ENCODE measurements at regions of chr2 and their contacts with region 1.

Region 1: GRCh38 chr2:112958428-112959108 is 19.2 kb upstream of the IL36G start:
- DNase-seq: peak in 1 of 2 experiments; percentile 40
- H3K4me3 ChIP-seq: no peak overlapping the region
- H3K27ac ChIP-seq: no peak overlapping the region
- H3K4me1 ChIP-seq: peaks cover 7% of the 10 kb centered on the region; the same call in 1 of the 2 replicates
- H3K27me3 ChIP-seq: no peaks in the 10 kb centered on the region
- CTCF ChIP-seq: peak; percentile 93

Region 2: GRCh38 chr2:112204411-112204810 is 754.2 kb before region 1 on chr2:
- CTCF ChIA-PET with region 1: no interaction called
- POLR2A ChIA-PET with region 1: no interaction called
- intact Hi-C with region 1: no loop called
- DNase-seq: no peak
- H3K4me3 ChIP-seq: no peak overlapping the region
- H3K27ac ChIP-seq: no peak overlapping the region
- H3K4me1 ChIP-seq: no peaks in the 10 kb centered on the region
- H3K27me3 ChIP-seq: no peaks in the 10 kb centered on the region
- CTCF ChIP-seq: no peak

Region 3: DNA sequence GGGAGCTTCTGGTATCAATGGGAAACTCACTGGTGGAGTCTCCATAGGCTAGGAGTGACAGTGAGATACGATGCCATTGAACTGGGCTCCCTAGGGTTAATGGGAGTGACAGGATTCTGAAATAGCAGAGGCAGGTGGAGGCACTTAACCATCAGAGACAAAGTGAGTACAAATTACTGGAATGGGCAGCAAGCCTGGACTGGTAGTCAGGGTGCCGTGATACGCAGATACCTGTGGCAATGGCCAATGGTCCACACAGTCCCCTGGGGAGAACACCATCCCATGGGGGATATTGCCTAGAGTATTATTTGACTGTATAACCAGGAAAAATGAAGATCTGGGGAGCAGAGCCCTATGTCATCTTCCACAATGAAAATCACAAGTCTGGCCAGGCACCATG is 356.8 kb before region 1 on chr2:
- CTCF ChIA-PET with region 1: no interaction called
- POLR2A ChIA-PET with region 1: no interaction called
- intact Hi-C with region 1: loop called (anchors 1 kb)
- DNase-seq: no peak
- H3K4me3 ChIP-seq: no peak overlapping the region
- H3K27ac ChIP-seq: no peak overlapping the region
- H3K4me1 ChIP-seq: peaks cover 23% of the 10 kb centered on the region
- H3K27me3 ChIP-seq: no peaks in the 10 kb centered on the region
- CTCF ChIP-seq: no peak

Region 4: GRCh38 chr2:112749755-112750559 is 208.6 kb before region 1 on chr2:
- CTCF ChIA-PET with region 1: no interaction called
- POLR2A ChIA-PET with region 1: no interaction called
- intact Hi-C with region 1: loop called (anchors 1 kb)
- DNase-seq: peak in 1 of 2 experiments; percentile 70
- H3K4me3 ChIP-seq: no peak overlapping the region
- H3K27ac ChIP-seq: no peak overlapping the region
- H3K4me1 ChIP-seq: no peaks in the 10 kb centered on the region
- H3K27me3 ChIP-seq: no peaks in the 10 kb centered on the region
- CTCF ChIP-seq: peak; percentile 94

Region 5: DNA sequence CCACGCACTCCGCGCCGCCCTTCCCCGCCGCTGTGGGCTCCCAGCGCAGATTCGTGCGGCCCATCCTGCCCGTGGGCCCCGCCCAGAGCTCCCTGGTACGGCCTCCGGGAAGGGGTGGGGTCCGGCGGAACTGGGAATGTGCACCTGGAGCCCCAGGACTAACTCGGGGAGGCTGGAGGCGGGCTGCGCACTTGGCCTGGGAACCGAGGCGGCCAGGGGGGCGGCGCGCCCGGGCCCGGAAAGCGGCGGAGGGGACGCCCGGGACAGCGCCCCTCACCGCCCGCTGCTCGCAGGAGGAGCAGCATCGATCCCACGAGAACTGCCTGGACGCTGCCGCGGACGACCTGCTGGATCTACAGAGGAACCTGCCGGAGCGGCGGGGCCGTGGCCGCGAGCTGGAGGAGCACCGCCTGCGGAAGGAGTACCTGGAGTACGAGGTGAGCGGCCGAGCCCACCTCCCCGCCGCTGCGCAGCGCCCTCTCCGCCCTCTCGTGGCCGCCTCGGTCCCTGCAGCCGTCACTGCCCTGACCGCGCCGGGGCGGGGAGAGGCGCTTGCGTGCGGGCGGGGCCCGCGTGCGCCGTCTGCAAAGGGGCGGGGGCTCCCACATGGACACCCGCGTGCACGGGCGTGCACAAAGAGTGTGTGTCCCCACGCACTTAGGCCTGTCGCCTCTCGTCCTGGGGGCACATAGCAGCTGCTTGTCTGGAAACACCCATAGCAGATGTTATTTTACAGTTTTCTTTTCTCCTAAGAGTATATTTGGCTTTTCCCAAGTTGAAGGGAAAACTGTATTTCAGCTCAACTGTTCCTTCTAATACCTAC is 240.4 kb after region 1 on chr2:
- CTCF ChIA-PET with region 1: no interaction called
- POLR2A ChIA-PET with region 1: no interaction called
- intact Hi-C with region 1: loop called (anchors 2 kb)
- DNase-seq: peak; percentile 72 to 93
- H3K4me3 ChIP-seq: peak overlapping the region; percentile 67
- H3K27ac ChIP-seq: peak overlapping the region; percentile 78
- H3K4me1 ChIP-seq: peaks cover 6% of the 10 kb centered on the region; the same call in 1 of the 2 replicates
- H3K27me3 ChIP-seq: no peaks in the 10 kb centered on the region
- CTCF ChIP-seq: peak; percentile 83